Pancreas (tissue), 10 donors: ENCODE measurements at regions of chr10 and their contacts with region 1.

Region 1: GRCh38 chr10:65701168-65701776 is 1224.6 kb upstream of the LRRTM3 start:
- DNase-seq: no peak
- ATAC-seq: no peak
- H3K4me3 ChIP-seq: no peak overlapping the region
- H3K27ac ChIP-seq: no peak overlapping the region
- H3K4me1 ChIP-seq: no peaks in the 10 kb centered on the region
- H3K27me3 ChIP-seq: no peaks in the 10 kb centered on the region
- CTCF ChIP-seq: no peak

Region 2: DNA sequence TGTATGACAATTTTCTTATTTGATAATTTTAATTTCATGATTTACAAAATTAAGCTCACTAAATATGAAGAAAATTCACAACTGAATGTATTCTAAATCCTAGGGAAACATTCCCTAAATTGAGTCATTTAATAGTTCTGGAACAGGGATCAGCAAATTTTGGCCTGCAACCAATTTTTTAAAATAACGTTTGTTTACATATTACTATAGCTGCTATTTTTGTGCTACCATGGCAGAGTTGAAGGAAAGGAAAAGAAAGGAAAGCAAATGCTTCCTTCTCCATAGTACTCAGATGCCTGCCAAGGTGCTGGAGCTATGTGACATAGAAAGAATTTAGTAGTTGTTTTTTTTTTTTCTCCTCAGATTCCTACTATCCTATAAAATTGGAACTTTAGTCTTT is 83.1 kb before region 1 on chr10:
- intact Hi-C with region 1: no loop called
- DNase-seq: no peak
- ATAC-seq: no peak
- H3K4me3 ChIP-seq: no peak overlapping the region
- H3K27ac ChIP-seq: no peak overlapping the region
- H3K4me1 ChIP-seq: no peaks in the 10 kb centered on the region
- H3K27me3 ChIP-seq: no peaks in the 10 kb centered on the region
- CTCF ChIP-seq: no peak

Region 3: DNA sequence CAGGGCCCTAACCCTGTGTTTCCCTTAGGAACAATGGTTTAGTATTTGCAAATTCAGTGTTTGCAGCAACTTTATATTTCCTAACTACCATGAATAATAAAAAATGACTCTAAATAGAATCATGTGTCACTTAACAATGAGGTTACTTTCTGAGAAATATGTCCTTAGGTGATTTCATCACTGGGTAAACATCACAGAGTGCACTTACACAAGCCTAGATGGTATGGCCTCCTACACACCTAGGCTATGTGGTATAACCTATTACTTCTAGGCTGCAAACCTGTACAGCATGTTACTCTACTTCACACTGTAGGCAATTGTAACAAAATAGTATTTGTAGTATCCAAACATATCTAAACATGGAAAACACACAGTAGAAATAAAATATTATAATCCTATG is 49.9 kb after region 1 on chr10:
- intact Hi-C with region 1: loop called in 1 of 3 experiments (anchors 10 kb)
- DNase-seq: no peak
- ATAC-seq: no peak
- H3K4me3 ChIP-seq: no peak overlapping the region
- H3K27ac ChIP-seq: no peak overlapping the region
- H3K4me1 ChIP-seq: peaks cover 0 to 6% (median 0%) of the 10 kb centered on the region in 3 donors
- H3K27me3 ChIP-seq: no peaks in the 10 kb centered on the region
- CTCF ChIP-seq: no peak